Cardiac septum (tissue), 1 donor: ENCODE measurements at regions of chr14 and their contacts with region 1.

Region 1: DNA sequence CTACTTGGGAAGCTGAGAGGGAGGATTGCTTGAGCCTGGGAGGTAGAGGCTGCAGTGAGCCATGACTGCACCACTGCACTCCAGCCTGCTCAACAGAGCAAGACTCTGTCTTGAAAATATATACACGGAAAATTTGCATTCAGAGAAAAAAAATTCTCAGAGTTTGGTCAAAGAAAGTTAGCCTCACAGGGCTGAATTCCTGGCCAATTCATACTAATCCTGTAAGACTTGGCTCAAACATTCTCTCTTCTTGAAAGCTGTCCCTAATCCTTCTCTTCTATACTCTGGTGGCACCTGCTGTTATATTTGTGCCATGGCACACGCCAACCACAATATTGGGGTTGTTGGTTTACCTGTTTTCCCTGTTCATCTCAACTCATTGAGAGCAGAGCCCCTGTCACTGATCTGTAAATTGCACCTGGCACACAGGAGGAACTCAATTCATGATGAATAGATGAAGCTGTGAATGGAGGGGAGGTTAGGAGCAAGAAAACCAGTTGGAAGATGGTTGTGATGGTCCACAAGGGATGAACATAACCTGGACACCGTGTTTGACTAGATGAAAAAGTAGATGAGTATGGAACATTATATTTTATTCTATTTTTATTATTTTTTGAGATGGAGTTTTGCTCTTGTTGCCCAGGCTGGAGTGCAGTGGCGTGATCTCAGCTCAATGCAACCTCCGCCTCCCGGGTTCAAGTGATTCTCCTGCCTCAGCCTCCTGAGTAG is 36.8 kb upstream of the SPTSSA start:
- DNase-seq: no peak

Region 2: DNA sequence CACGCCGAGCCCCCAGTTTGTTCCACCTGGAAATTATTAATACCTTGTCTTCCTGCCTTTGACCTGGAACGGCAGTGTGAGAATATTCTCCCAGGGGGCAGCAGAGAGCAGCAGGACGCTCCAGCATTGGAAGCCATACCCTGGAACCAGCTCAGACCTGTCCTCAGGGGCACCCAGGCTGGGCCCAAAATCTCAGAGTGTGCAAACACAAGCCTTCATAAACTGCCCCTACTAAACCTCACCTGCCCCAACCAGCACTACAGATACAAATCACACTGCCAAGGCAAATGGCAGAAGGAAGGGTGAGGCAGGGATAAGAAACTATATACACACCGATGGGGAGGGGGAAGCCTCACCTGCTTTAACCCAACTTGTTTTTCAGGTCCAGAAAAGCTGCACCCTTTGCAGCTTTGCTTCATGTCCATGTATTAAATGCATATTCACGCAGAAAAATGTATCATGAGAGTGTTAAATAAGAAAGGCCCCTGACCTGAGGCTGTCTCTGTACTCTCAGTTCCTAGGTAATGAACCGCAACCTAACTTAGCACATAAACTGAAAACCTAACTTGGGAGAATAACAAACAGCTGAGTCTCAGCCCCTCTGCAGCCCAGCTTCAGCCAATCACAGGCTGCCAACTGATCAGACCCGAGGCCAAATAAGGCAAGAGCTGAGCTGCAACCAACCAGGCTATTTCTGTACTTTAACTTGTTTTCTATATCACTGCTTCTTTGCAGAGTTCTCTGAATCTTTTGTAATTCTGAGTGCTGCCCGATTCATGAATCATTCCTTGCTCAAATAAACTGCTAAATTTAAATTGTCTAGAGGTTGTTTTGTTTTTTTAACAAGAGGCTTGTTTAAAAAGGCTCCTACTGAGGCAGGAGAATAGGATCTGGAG is 166.9 kb before region 1 on chr14:
- intact Hi-C with region 1: loop called (anchors 2 kb)
- DNase-seq: no peak

Region 3: GRCh38 chr14:35446450-35446849 is 947.6 kb after region 1 on chr14:
- intact Hi-C with region 1: no loop called
- DNase-seq: no peak